Naive thymus-derived CD4-positive, alpha-beta T cell (primary cell): ENCODE measurements at regions of chr14 and their contacts with region 1.

Region 1: DNA sequence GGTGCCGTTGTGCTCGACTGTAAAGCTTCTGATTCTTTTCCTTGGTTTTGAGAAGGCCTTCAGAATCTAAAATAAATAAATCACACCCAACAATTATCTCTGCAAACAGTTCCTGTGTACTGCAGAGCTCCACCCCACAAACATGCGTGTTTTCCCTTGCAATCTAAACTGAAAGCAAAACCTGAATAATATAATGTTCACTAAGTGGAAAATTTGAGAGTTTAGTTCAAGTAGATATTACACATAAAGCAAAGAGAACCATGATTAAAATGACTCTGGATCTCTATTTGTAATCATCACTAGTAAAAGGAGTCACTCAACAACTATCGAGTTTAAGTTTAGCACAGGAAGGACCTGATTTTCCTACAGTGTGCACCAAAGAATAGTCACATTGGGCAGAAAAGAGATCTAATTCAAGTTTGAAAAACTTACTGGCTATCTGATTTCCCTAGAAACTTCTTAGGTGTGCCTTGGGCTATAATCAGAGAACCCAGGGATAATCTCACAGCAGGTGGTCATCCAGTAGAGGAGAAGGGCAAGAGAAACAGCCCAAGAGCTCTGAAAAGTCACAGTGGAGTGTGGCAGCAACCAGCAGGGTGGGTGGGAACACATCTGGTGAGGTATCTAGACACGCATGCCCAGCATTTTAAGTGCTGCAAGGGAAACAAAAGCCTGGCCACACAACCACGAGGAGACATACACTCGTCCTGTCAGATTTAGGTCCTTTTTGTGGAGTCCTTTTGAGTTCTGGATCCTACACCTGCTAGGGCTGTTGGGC is 25.4 kb downstream of the ATG14 start:
- DNase-seq: no peak
- ATAC-seq: peak; percentile 29
- H3K4me3 ChIP-seq: no peak overlapping the region
- H3K4me3 Mint-ChIP-seq: peak overlapping the region in 2 of 10 donors; percentile 52 to 73
- H3K27ac ChIP-seq: no peak overlapping the region
- H3K27ac Mint-ChIP-seq: peak overlapping the region; percentile 22 to 94 (median 52)
- H3K4me1 ChIP-seq: peaks cover 0 to 5% of the 10 kb centered on the region in 2 donors
- H3K4me1 Mint-ChIP-seq: peaks cover 0 to 32% (median 8%) of the 10 kb centered on the region in 7 donors
- H3K27me3 ChIP-seq: no peaks in the 10 kb centered on the region
- H3K27me3 Mint-ChIP-seq: no peaks in the 10 kb centered on the region

Region 2: GRCh38 chr14:55373784-55374705 is 12.2 kb before region 1 on chr14:
- CTCF ChIA-PET with region 1: no interaction called
- POLR2A ChIA-PET with region 1: no interaction called
- intact Hi-C with region 1: loop called in 1 of 2 experiments (anchors 1 kb)
- DNase-seq: peak in 8 of 9 donors; percentile 18 to 76 (median 58)
- ATAC-seq: peak; percentile 93
- H3K4me3 ChIP-seq: no peak overlapping the region
- H3K4me3 Mint-ChIP-seq: peak overlapping the region in 9 of 10 donors; percentile 22 to 82 (median 54)
- H3K27ac ChIP-seq: peak overlapping the region; percentile 64
- H3K27ac Mint-ChIP-seq: peak overlapping the region; percentile 75 to 94 (median 83)
- H3K4me1 ChIP-seq: peaks cover 12 to 20% of the 10 kb centered on the region in 2 donors
- H3K4me1 Mint-ChIP-seq: peaks cover 13 to 44% (median 30%) of the 10 kb centered on the region in 7 donors
- H3K27me3 ChIP-seq: no peaks in the 10 kb centered on the region
- H3K27me3 Mint-ChIP-seq: no peaks in the 10 kb centered on the region